ENCODE measurements at regions of chr11 and their contacts with region 1.

Region 1: DNA sequence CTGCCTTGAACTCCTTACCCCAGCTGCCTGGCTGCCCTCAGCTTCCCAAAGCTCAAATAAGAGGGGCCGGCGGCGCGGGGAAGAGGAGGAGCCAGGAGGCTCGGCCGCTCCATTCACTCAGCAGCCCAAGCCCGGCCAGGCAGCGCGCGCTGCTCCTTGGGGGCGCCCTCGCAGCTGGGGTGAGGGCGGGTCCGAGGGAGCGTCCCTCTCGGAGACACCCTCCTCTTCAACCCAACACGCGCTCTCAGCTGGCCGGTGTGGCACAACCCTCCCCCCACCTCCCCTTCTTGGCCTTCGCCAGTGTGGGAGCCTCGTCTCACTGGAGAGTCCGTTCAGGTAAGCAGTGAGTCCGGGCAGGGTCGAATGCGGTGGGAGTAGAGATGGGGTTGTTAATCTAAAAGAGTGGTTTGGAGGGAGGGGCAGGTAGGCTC is at the start of gene WT1:
- DNase-seq: peak; percentile 82 to 89 (median 86)
- ATAC-seq: peak; percentile 88 to 89
- H3K4me3 ChIP-seq: peak within 1 kb of the TSS; percentile 52
- H3K27ac ChIP-seq: peak within 1 kb of the TSS; percentile 72
- H3K4me1 ChIP-seq: no peaks in the 10 kb centered on the region
- H3K27me3 ChIP-seq: no peaks in the 10 kb centered on the region
- total RNA-seq, gene WT1: 1.4 to 3.0 (median 2.0) TPM

Region 2: GRCh38 chr11:32583459-32584271 is 148.1 kb after region 1 on chr11 and contains the start of gene EIF3M:
- intact Hi-C with region 1: loop called in 2 of 4 experiments (anchors 5 to 10 kb)
- DNase-seq: peak; percentile 98 to 99 (median 99)
- ATAC-seq: peak; percentile 100
- H3K4me3 ChIP-seq: peak within 1 kb of the TSS; percentile 63
- H3K27ac ChIP-seq: peak within 1 kb of the TSS; percentile 28
- H3K4me1 ChIP-seq: peaks cover 2% of the 10 kb centered on the region
- H3K27me3 ChIP-seq: no peaks in the 10 kb centered on the region
- total RNA-seq, gene EIF3M: 150 to 166 (median 159) TPM